Naive thymus-derived CD4-positive, alpha-beta T cell (primary cell): ENCODE measurements at regions of chrX and their contacts with region 1.

Region 1: DNA sequence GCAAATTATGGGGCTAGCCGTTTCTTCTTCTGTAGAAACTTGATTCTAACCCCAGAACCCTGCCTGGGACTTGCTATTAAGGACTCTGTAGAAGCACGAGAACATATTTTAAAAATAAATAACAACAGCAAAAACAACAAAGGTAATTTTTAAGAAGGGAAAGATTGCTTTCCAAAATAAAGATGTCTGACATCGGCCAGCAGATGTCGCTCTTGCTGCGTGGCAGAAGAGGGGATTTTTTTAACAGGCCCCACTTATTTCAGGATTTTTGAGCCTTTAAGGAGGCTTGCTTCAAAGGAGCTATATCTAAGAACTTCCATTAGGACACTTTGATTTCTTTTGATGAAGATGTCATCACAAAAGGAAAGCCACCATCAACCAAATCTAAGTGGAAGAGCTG is 62.8 kb upstream of the EGFL6 start:
- DNase-seq: peak in 8 of 9 donors; percentile 10 to 47 (median 32)
- ATAC-seq: no peak
- H3K4me3 ChIP-seq: no peak overlapping the region
- H3K4me3 Mint-ChIP-seq: no peak overlapping the region
- H3K27ac ChIP-seq: no peak overlapping the region
- H3K27ac Mint-ChIP-seq: peak overlapping the region in 1 of 9 donors; percentile 15
- H3K4me1 ChIP-seq: no peaks in the 10 kb centered on the region
- H3K4me1 Mint-ChIP-seq: peaks cover 0 to 8% (median 2%) of the 10 kb centered on the region in 7 donors
- H3K27me3 ChIP-seq: no peaks in the 10 kb centered on the region
- H3K27me3 Mint-ChIP-seq: no peaks in the 10 kb centered on the region

Region 2: DNA sequence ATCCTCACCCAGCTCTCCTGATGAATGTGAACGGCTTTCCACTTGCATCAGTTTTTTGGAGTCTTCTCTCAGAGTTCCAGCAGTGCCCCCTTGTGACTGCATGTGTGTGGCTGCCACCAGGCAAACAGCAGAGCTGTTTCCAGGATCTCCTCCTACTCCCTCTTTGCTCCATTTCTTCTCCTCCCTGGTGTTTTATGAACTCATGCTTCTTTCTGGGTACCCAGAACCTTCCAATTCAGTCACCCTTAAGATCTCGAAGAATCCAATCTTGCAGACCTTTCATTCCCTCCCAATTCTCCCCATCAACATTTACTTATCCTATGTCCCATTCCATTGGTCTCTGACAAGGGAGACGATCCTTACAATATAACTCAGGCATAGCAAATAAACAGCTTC is 139.6 kb after region 1 on chrX:
- CTCF ChIA-PET with region 1: interaction called, 8 read pairs
- POLR2A ChIA-PET with region 1: interaction called, 3 read pairs
- intact Hi-C with region 1: loop called (anchors 1 kb)
- DNase-seq: peak in 4 of 9 donors; percentile 4 to 23 (median 11)
- ATAC-seq: no peak
- H3K4me3 ChIP-seq: no peak overlapping the region
- H3K4me3 Mint-ChIP-seq: no peak overlapping the region
- H3K27ac ChIP-seq: no peak overlapping the region
- H3K27ac Mint-ChIP-seq: peak overlapping the region in 3 of 9 donors; percentile 32 to 65 (median 52)
- H3K4me1 ChIP-seq: no peaks in the 10 kb centered on the region
- H3K4me1 Mint-ChIP-seq: peaks cover 0 to 14% (median 6%) of the 10 kb centered on the region in 7 donors
- H3K27me3 ChIP-seq: no peaks in the 10 kb centered on the region
- H3K27me3 Mint-ChIP-seq: no peaks in the 10 kb centered on the region

Region 3: GRCh38 chrX:13688384-13688957 is 181.9 kb after region 1 on chrX:
- CTCF ChIA-PET with region 1: no interaction called
- POLR2A ChIA-PET with region 1: no interaction called
- intact Hi-C with region 1: no loop called
- DNase-seq: peak in 1 of 9 donors; percentile 4
- ATAC-seq: peak; percentile 6
- H3K4me3 ChIP-seq: peak overlapping the region; percentile 72
- H3K4me3 Mint-ChIP-seq: peak overlapping the region; percentile 79 to 96 (median 92)
- H3K27ac ChIP-seq: peak overlapping the region; percentile 84
- H3K27ac Mint-ChIP-seq: peak overlapping the region; percentile 86 to 98 (median 95)
- H3K4me1 ChIP-seq: peaks cover 10 to 14% of the 10 kb centered on the region in 2 donors
- H3K4me1 Mint-ChIP-seq: peaks cover 21 to 48% (median 35%) of the 10 kb centered on the region in 7 donors
- H3K27me3 ChIP-seq: no peaks in the 10 kb centered on the region
- H3K27me3 Mint-ChIP-seq: no peaks in the 10 kb centered on the region

Region 4: GRCh38 chrX:13742397-13743176 is 236.0 kb after region 1 on chrX:
- CTCF ChIA-PET with region 1: interaction called, 3 read pairs
- POLR2A ChIA-PET with region 1: no interaction called
- intact Hi-C with region 1: loop called in 1 of 2 experiments (anchors 2 kb)
- DNase-seq: peak in 6 of 9 donors; percentile 14 to 53 (median 28)
- ATAC-seq: peak; percentile 91
- H3K4me3 ChIP-seq: no peak overlapping the region
- H3K4me3 Mint-ChIP-seq: peak overlapping the region; percentile 5 to 75 (median 43)
- H3K27ac ChIP-seq: peak overlapping the region; percentile 48
- H3K27ac Mint-ChIP-seq: peak overlapping the region; percentile 68 to 91 (median 78)
- H3K4me1 ChIP-seq: peaks cover 0 to 22% of the 10 kb centered on the region in 2 donors
- H3K4me1 Mint-ChIP-seq: peaks cover 0 to 34% (median 20%) of the 10 kb centered on the region in 7 donors
- H3K27me3 ChIP-seq: no peaks in the 10 kb centered on the region
- H3K27me3 Mint-ChIP-seq: no peaks in the 10 kb centered on the region

Region 5: DNA sequence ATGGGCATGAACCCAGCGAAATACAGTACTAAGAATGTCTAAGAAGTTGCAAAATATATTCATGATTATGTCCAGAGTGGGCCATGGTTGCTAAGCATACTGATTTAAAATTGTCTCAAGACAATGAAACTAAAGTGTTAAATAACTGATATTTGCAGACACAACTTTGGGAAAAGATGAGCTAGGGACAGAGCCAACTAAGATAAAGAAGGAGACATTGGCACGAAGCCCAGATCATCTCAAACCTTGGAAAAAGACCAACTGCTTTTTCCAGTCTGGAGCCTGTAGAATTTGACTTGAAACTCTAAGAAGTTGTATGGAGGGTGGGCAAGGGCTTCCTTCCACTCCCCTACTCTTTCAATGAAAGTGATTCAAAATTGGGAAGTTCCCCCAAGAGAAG is 914.3 kb after region 1 on chrX:
- CTCF ChIA-PET with region 1: no interaction called
- POLR2A ChIA-PET with region 1: no interaction called
- intact Hi-C with region 1: no loop called
- DNase-seq: no peak
- ATAC-seq: no peak
- H3K4me3 ChIP-seq: no peak overlapping the region
- H3K4me3 Mint-ChIP-seq: no peak overlapping the region
- H3K27ac ChIP-seq: no peak overlapping the region
- H3K27ac Mint-ChIP-seq: no peak overlapping the region
- H3K4me1 ChIP-seq: no peaks in the 10 kb centered on the region
- H3K4me1 Mint-ChIP-seq: no peaks in the 10 kb centered on the region
- H3K27me3 ChIP-seq: no peaks in the 10 kb centered on the region
- H3K27me3 Mint-ChIP-seq: peaks cover 0 to 8% (median 0%) of the 10 kb centered on the region in 5 donors